ENCODE measurements at regions of chr17 and their contacts with region 1.

Region 1: DNA sequence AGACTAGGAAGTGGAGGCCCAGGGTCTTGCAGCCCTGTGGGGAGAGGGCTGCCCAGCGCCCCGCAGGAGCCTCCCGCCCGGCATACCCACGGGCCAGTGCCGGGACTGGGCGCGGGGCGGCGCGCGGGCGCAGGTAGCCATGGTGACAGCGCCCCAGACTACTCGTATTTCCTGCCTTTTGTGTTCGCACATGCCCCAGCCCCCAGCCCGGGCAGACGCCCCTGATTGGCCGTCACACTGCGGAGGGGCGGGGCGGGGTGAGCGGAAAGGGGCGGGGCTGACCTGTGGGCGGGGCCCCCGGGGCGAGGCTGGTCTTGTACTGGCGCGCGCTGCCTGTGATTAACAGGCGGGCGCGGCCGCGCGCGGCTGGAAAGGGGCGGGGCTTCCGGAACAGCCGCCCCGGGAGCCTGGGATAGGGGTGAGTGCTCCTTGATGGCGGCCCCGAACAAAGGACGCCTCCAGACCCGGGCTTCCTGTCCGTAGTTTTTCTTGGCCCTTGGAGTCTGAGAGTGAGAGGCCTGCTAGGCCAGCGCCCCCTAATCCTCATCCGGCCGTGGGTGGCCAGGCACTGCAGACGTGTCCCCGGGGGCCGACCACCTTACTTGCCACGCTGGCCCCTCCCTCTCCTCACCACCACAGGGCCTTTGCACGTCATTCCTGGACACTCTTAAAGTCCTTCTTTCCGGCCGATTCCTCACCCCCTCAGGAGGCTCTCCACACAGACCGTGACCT is 71.0 kb downstream of the RAI1 start:
- DNase-seq: peak; percentile 98
- H3K4me3 Mint-ChIP-seq: peak overlapping the region; percentile 96
- H3K27ac Mint-ChIP-seq: peak overlapping the region; percentile 96
- H3K4me1 Mint-ChIP-seq: peaks cover 59% of the 10 kb centered on the region
- H3K27me3 Mint-ChIP-seq: no peaks in the 10 kb centered on the region

Region 2: GRCh38 chr17:17849845-17850373 is 97.7 kb after region 1 on chr17:
- CTCF ChIA-PET with region 1: no interaction called
- POLR2A ChIA-PET with region 1: interaction called, 12 read pairs
- DNase-seq: peak; percentile 84
- H3K4me3 Mint-ChIP-seq: no peak overlapping the region
- H3K27ac Mint-ChIP-seq: peak overlapping the region; percentile 99
- H3K4me1 Mint-ChIP-seq: peaks cover 79% of the 10 kb centered on the region
- H3K27me3 Mint-ChIP-seq: no peaks in the 10 kb centered on the region